A673 (cell line): ENCODE measurements at regions of chr15 and their contacts with region 1.

Region 1: DNA sequence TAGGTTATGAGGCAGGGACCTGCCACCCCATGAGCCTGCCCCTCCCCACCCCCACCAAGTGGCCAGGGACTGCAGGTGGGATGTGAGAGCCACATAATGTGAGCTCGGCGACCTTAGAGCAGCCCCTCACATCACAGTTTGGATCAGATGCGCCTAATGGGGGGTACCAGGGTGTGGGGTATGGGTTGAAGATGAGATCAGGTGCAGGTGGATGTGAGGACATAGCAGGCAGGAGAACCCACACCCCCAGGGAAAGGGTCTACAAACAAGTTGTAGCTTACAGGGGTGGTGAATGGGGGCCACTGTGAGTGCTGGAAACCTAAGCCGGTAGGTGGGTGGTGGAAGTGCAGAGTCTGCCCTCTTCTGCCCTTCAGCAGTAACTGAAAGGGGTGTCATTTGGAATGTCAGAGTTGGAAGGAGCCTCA is 94.0 kb downstream of the CORO2B start:
- DNase-seq: peak; percentile 46
- H3K4me3 ChIP-seq: no peak overlapping the region
- H3K27ac ChIP-seq: no peak overlapping the region
- H3K4me1 ChIP-seq: peaks cover 3% of the 10 kb centered on the region
- H3K27me3 ChIP-seq: no peaks in the 10 kb centered on the region
- CTCF ChIP-seq: peak; percentile 51

Region 2: GRCh38 chr15:68304589-68305337 is 368.0 kb before region 1 on chr15:
- CTCF ChIA-PET with region 1: interaction called, 3 read pairs
- POLR2A ChIA-PET with region 1: no interaction called
- intact Hi-C with region 1: loop called (anchors 5 kb)
- DNase-seq: no peak
- H3K4me3 ChIP-seq: no peak overlapping the region
- H3K27ac ChIP-seq: no peak overlapping the region
- H3K4me1 ChIP-seq: no peaks in the 10 kb centered on the region
- H3K27me3 ChIP-seq: no peaks in the 10 kb centered on the region
- CTCF ChIP-seq: no peak

Region 3: GRCh38 chr15:68550481-68551295 is 122.1 kb before region 1 on chr15:
- CTCF ChIA-PET with region 1: interaction called, 50 read pairs
- POLR2A ChIA-PET with region 1: no interaction called
- intact Hi-C with region 1: loop called (anchors 2 kb)
- DNase-seq: peak; percentile 62
- H3K4me3 ChIP-seq: no peak overlapping the region
- H3K27ac ChIP-seq: no peak overlapping the region
- H3K4me1 ChIP-seq: no peaks in the 10 kb centered on the region
- H3K27me3 ChIP-seq: peaks cover 4% of the 10 kb centered on the region
- CTCF ChIP-seq: peak; percentile 95

Region 4: GRCh38 chr15:68578174-68578979 is 94.4 kb before region 1 on chr15:
- CTCF ChIA-PET with region 1: interaction called, 12 read pairs
- POLR2A ChIA-PET with region 1: no interaction called
- intact Hi-C with region 1: loop called (anchors 5 kb)
- DNase-seq: peak; percentile 70
- H3K4me3 ChIP-seq: peak overlapping the region; percentile 81
- H3K27ac ChIP-seq: peak overlapping the region; percentile 72
- H3K4me1 ChIP-seq: peaks cover 13% of the 10 kb centered on the region
- H3K27me3 ChIP-seq: no peaks in the 10 kb centered on the region
- CTCF ChIP-seq: peak; percentile 43

Region 5: DNA sequence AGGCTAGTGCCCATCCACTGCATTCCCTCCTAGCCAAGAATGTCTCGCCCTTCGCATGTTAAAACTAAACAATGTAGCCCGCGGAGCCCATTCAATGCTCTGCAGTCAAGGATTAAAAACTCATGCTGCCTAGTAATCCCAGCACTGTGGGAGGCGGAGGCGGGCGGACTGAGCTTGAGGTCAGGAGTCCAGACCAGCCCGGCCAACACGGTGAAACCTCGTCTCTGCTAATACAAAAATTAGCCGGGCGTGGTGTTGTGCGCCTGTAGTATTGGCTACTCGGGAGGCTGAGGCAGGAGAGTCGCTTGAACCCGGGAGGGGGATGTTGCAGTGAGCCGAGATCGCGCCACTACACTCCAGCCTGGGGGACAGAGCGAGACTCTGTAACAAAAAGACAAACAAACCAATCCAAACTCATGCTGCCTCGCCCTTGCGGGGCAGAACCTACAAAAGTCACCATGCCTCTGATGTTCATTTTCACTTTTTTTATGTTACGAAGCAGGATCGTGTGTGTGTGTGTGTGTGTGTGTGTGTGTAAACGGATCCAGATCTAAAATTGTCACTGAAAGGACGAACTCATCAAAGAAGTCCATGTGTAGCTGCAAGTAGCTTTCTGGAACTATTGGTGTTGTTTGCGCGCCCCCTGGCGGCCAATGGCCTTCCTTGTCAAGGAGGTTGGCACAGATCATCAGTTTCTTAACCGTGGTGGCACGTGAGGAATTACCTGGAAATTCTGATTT is 202.8 kb after region 1 on chr15:
- CTCF ChIA-PET with region 1: interaction called, 17 read pairs
- POLR2A ChIA-PET with region 1: no interaction called
- intact Hi-C with region 1: no loop called
- DNase-seq: peak; percentile 93
- H3K4me3 ChIP-seq: peak overlapping the region; percentile 41
- H3K27ac ChIP-seq: no peak overlapping the region
- H3K4me1 ChIP-seq: peaks cover 3% of the 10 kb centered on the region
- H3K27me3 ChIP-seq: no peaks in the 10 kb centered on the region
- CTCF ChIP-seq: peak; percentile 86